ENCODE measurements at regions of chr3 and their contacts with region 1.

Region 1: GRCh38 chr3:48465531-48466378 is 19.2 kb downstream of the ATRIP start:
- DNase-seq: peak; percentile 78 to 83 (median 79)
- H3K4me3 ChIP-seq: peak overlapping the region; percentile 69 to 94
- H3K4me3 Mint-ChIP-seq: peak overlapping the region; percentile 87 to 94 (median 90)
- H3K27ac ChIP-seq: peak overlapping the region; percentile 86
- H3K27ac Mint-ChIP-seq: peak overlapping the region; percentile 92 to 98 (median 96)
- H3K4me1 ChIP-seq: peaks cover 55% of the 10 kb centered on the region
- H3K4me1 Mint-ChIP-seq: peaks cover 30 to 58% (median 49%) of the 10 kb centered on the region in 4 donors
- H3K27me3 ChIP-seq: no peaks in the 10 kb centered on the region
- H3K27me3 Mint-ChIP-seq: no peaks in the 10 kb centered on the region

Region 2: DNA sequence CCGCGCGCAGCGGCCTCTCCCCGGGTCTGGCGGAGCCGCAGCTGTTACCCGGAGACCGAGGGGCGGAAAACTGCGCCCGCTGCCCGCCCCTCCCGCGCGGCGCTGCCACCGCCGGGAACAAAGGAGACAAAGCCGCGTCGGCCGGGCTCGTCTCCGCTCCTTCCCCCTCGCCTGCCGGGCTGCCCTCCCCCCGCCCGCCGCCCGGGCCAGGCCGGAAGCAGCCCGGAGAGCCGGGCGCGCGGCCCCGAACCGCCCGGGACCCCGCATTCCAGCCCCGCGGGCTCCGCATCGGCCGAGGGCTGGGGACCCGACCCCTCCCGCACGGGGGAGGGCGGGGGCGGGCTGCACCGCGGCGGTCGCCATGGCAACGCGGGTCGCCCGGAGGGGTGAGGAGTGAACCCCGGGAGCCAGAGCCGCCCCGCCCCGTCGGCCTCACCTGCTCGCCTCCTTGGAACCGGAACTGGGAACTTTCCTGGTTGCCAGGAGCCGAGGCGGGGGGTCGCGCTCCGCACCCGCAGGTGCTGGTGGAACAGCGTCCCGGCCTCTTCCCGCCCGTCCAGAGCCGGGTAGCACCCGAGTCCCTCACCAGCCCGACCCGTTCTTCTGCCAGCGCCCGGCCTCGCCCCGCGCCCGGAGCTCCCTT is 36.3 kb before region 1 on chr3:
- CTCF ChIA-PET with region 1: interaction called, 83 read pairs
- POLR2A ChIA-PET with region 1: no interaction called
- intact Hi-C with region 1: loop called (anchors 1 kb)
- DNase-seq: peak; percentile 59 to 64 (median 63)
- H3K4me3 ChIP-seq: peak overlapping the region in 1 of 2 donors; percentile 51
- H3K4me3 Mint-ChIP-seq: peak overlapping the region; percentile 68 to 87 (median 76)
- H3K27ac ChIP-seq: peak overlapping the region; percentile 11
- H3K27ac Mint-ChIP-seq: peak overlapping the region in 2 of 7 donors; percentile 31 to 40
- H3K4me1 ChIP-seq: peaks cover 11% of the 10 kb centered on the region
- H3K4me1 Mint-ChIP-seq: peaks cover 4 to 22% (median 15%) of the 10 kb centered on the region in 4 donors
- H3K27me3 ChIP-seq: no peaks in the 10 kb centered on the region
- H3K27me3 Mint-ChIP-seq: no peaks in the 10 kb centered on the region

Region 3: GRCh38 chr3:48446425-48447193 is 19.1 kb before region 1 on chr3 and contains the start of gene ATRIP:
- CTCF ChIA-PET with region 1: interaction called, 3 read pairs
- POLR2A ChIA-PET with region 1: interaction called, 51 read pairs
- intact Hi-C with region 1: no loop called
- DNase-seq: peak; percentile 79 to 86 (median 82)
- H3K4me3 ChIP-seq: peak within 1 kb of the TSS; percentile 76 to 84
- H3K4me3 Mint-ChIP-seq: peak within 1 kb of the TSS; percentile 83 to 96 (median 90)
- H3K27ac ChIP-seq: peak within 1 kb of the TSS; percentile 68
- H3K27ac Mint-ChIP-seq: peak within 1 kb of the TSS; percentile 91 to 97 (median 96)
- H3K4me1 ChIP-seq: peaks cover 30% of the 10 kb centered on the region
- H3K4me1 Mint-ChIP-seq: peaks cover 22 to 49% (median 37%) of the 10 kb centered on the region in 4 donors
- H3K27me3 ChIP-seq: no peaks in the 10 kb centered on the region
- H3K27me3 Mint-ChIP-seq: no peaks in the 10 kb centered on the region
- total RNA-seq, gene ATRIP: 14.9 to 15.2 TPM

Region 4: GRCh38 chr3:48478596-48479555 is 13.1 kb after region 1 on chr3:
- CTCF ChIA-PET with region 1: interaction called, 5 read pairs
- POLR2A ChIA-PET with region 1: interaction called, 60 read pairs
- intact Hi-C with region 1: loop called (anchors 1 kb)
- DNase-seq: peak; percentile 81 to 89 (median 85)
- H3K4me3 ChIP-seq: peak overlapping the region; percentile 71 to 80
- H3K4me3 Mint-ChIP-seq: peak overlapping the region; percentile 89 to 97 (median 90)
- H3K27ac ChIP-seq: peak overlapping the region; percentile 59
- H3K27ac Mint-ChIP-seq: peak overlapping the region; percentile 89 to 99 (median 98)
- H3K4me1 ChIP-seq: peaks cover 58% of the 10 kb centered on the region
- H3K4me1 Mint-ChIP-seq: peaks cover 31 to 59% (median 40%) of the 10 kb centered on the region in 4 donors
- H3K27me3 ChIP-seq: no peaks in the 10 kb centered on the region
- H3K27me3 Mint-ChIP-seq: no peaks in the 10 kb centered on the region

Region 5: GRCh38 chr3:48548729-48549705 is 83.3 kb after region 1 on chr3:
- CTCF ChIA-PET with region 1: interaction called, 4 read pairs
- POLR2A ChIA-PET with region 1: interaction called, 3 read pairs
- intact Hi-C with region 1: loop called (anchors 1 kb)
- DNase-seq: peak; percentile 77 to 82 (median 78)
- H3K4me3 ChIP-seq: no peak overlapping the region
- H3K4me3 Mint-ChIP-seq: no peak overlapping the region
- H3K27ac ChIP-seq: no peak overlapping the region
- H3K27ac Mint-ChIP-seq: peak overlapping the region in 2 of 7 donors; percentile 17 to 35
- H3K4me1 ChIP-seq: peaks cover 8% of the 10 kb centered on the region
- H3K4me1 Mint-ChIP-seq: peaks cover 5 to 21% (median 6%) of the 10 kb centered on the region in 4 donors
- H3K27me3 ChIP-seq: no peaks in the 10 kb centered on the region
- H3K27me3 Mint-ChIP-seq: no peaks in the 10 kb centered on the region

Region 6: GRCh38 chr3:48685602-48686511 is 220.1 kb after region 1 on chr3 and contains the start of gene NCKIPSD:
- CTCF ChIA-PET with region 1: no interaction called
- POLR2A ChIA-PET with region 1: no interaction called
- intact Hi-C with region 1: no loop called
- DNase-seq: peak; percentile 87 to 94 (median 90)
- H3K4me3 ChIP-seq: peak within 1 kb of the TSS; percentile 59 to 82
- H3K4me3 Mint-ChIP-seq: peak within 1 kb of the TSS; percentile 87 to 99 (median 94)
- H3K27ac ChIP-seq: peak within 1 kb of the TSS; percentile 77
- H3K27ac Mint-ChIP-seq: peak within 1 kb of the TSS; percentile 81 to 94 (median 92)
- H3K4me1 ChIP-seq: peaks cover 34% of the 10 kb centered on the region
- H3K4me1 Mint-ChIP-seq: peaks cover 17 to 49% (median 27%) of the 10 kb centered on the region in 4 donors
- H3K27me3 ChIP-seq: no peaks in the 10 kb centered on the region
- H3K27me3 Mint-ChIP-seq: no peaks in the 10 kb centered on the region
- total RNA-seq, gene NCKIPSD: 20.1 to 21.7 TPM